MCF 10A (cell line): ENCODE measurements at regions of chr10 and their contacts with region 1.

Region 1: GRCh38 chr10:132023092-132023811 is 41.5 kb upstream of the BNIP3 start:
- DNase-seq: peak; percentile 73
- H3K4me3 Mint-ChIP-seq: peak overlapping the region; percentile 24
- H3K27ac Mint-ChIP-seq: no peak overlapping the region
- H3K4me1 Mint-ChIP-seq: peaks cover 5% of the 10 kb centered on the region
- H3K27me3 Mint-ChIP-seq: peaks cover 44% of the 10 kb centered on the region
- CTCF ChIP-seq: peak; percentile 80

Region 2: GRCh38 chr10:131900350-131901146 is 122.7 kb before region 1 on chr10 and contains the start of gene PPP2R2D:
- CTCF ChIA-PET with region 1: interaction called, 7 read pairs
- POLR2A ChIA-PET with region 1: interaction called, 6 read pairs
- intact Hi-C with region 1: loop called (anchors 1 kb)
- DNase-seq: peak; percentile 93
- H3K4me3 Mint-ChIP-seq: peak within 1 kb of the TSS; percentile 84
- H3K27ac Mint-ChIP-seq: peak within 1 kb of the TSS; percentile 85
- H3K4me1 Mint-ChIP-seq: peaks cover 22% of the 10 kb centered on the region
- H3K27me3 Mint-ChIP-seq: peaks cover 18% of the 10 kb centered on the region
- CTCF ChIP-seq: no peak
- total RNA-seq, gene PPP2R2D: 34.9 and 35.5 TPM in 2 replicates

Region 3: GRCh38 chr10:131943021-131943814 is 80.0 kb before region 1 on chr10:
- CTCF ChIA-PET with region 1: interaction called, 32 read pairs
- POLR2A ChIA-PET with region 1: no interaction called
- intact Hi-C with region 1: no loop called
- DNase-seq: peak; percentile 22
- H3K4me3 Mint-ChIP-seq: no peak overlapping the region
- H3K27ac Mint-ChIP-seq: no peak overlapping the region
- H3K4me1 Mint-ChIP-seq: peaks cover 23% of the 10 kb centered on the region
- H3K27me3 Mint-ChIP-seq: no peaks in the 10 kb centered on the region
- CTCF ChIP-seq: no peak

Region 4: GRCh38 chr10:131981429-131982184 is 41.6 kb before region 1 on chr10 and contains the start of gene BNIP3:
- CTCF ChIA-PET with region 1: interaction called, 33 read pairs
- POLR2A ChIA-PET with region 1: interaction called, 8 read pairs
- intact Hi-C with region 1: loop called (anchors 1 kb)
- DNase-seq: peak; percentile 91
- H3K4me3 Mint-ChIP-seq: peak within 1 kb of the TSS; percentile 82
- H3K27ac Mint-ChIP-seq: peak within 1 kb of the TSS; percentile 75
- H3K4me1 Mint-ChIP-seq: peaks cover 18% of the 10 kb centered on the region
- H3K27me3 Mint-ChIP-seq: no peaks in the 10 kb centered on the region
- CTCF ChIP-seq: no peak
- total RNA-seq, gene BNIP3: 47.0 and 53.0 TPM in 2 replicates

Region 5: DNA sequence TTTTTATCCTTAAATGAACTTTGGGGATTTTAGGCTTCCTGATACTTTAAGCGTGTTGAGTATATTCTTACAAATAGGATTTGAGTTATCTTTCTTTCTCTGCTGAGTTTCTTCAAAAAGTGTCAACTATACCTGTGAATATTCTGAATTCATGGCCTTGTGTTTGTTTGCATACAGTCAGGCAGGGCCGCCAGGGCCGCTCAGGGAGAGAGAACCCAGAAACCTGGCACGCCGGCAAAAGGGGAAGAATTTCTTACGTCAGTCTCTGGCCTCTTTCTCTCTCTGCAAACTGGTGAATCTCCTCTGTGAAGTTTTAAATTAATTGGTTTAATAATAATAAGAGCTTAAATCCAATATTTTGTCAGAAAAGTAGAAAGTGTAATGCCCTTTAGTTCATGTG is 12.2 kb before region 1 on chr10:
- CTCF ChIA-PET with region 1: interaction called, 29 read pairs
- POLR2A ChIA-PET with region 1: interaction called, 3 read pairs
- intact Hi-C with region 1: no loop called
- DNase-seq: no peak
- H3K4me3 Mint-ChIP-seq: no peak overlapping the region
- H3K27ac Mint-ChIP-seq: no peak overlapping the region
- H3K4me1 Mint-ChIP-seq: peaks cover 5% of the 10 kb centered on the region
- H3K27me3 Mint-ChIP-seq: no peaks in the 10 kb centered on the region
- CTCF ChIP-seq: no peak

Region 6: GRCh38 chr10:132142411-132143161 is 119.3 kb after region 1 on chr10:
- CTCF ChIA-PET with region 1: interaction called, 6 read pairs
- POLR2A ChIA-PET with region 1: no interaction called
- intact Hi-C with region 1: loop called (anchors 10 kb)
- DNase-seq: peak; percentile 36
- H3K4me3 Mint-ChIP-seq: no peak overlapping the region
- H3K27ac Mint-ChIP-seq: no peak overlapping the region
- H3K4me1 Mint-ChIP-seq: no peaks in the 10 kb centered on the region
- H3K27me3 Mint-ChIP-seq: no peaks in the 10 kb centered on the region
- CTCF ChIP-seq: peak; percentile 97